Sigmoid colon (tissue), 7 donors: ENCODE measurements at regions of chr2 and their contacts with region 1.

Region 1: GRCh38 chr2:63841254-63842022 is at the start of gene UGP2:
- DNase-seq: peak; percentile 96
- H3K4me3 ChIP-seq: peak within 1 kb of the TSS; percentile 81 to 97 (median 95)
- H3K27ac ChIP-seq: peak within 1 kb of the TSS; percentile 93 to 100 (median 98)
- H3K4me1 ChIP-seq: peaks cover 0 to 55% (median 21%) of the 10 kb centered on the region in 4 donors
- H3K27me3 ChIP-seq: no peaks in the 10 kb centered on the region
- CTCF ChIP-seq: no peak
- EP300 ChIP-seq: no peak
- POLR2A ChIP-seq: peak; percentile 56 to 67
- total RNA-seq, gene UGP2: 132 to 196 (median 149) TPM

Region 2: DNA sequence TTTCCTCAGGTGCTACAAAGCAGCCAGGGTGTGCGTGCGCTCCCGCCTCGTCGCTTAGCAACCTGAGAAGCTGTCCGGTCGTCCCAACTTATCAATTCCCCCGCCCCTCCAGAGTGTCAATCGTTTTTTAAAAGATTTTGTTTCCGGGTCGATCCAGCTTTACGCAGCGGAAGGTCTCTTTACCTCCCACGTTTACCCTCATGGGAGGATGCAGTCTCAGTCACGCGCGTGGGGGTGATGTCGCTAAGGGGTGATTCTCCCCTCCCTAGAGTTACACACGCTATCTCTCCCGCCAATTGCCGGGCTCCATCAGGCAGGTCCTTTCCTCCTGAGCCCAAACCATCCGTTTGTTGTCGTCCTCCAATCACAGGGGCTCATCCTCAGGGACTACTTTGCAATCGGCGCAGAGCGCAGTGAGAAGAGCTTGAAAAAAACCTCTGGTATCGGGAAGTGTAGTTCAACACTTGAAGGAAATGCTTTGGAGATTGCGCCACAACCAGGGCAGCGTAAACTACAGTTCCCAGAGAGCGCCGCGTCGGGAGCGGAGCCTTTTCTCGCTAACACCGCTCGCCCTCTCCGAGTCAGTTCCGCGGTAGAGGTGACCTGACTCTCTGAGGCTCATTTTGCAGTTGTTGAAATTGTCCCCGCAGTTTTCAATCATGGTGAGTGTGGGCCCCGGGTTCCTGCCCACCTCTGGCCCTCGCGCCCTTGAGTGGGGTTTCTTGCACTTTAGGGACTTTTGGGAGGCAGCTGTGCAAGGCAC is 252.9 kb before region 1 on chr2 and contains the starts of genes MDH1 and WDPCP:
- intact Hi-C with region 1: loop called (anchors 5 kb)
- DNase-seq: peak; percentile 97
- H3K4me3 ChIP-seq: peak within 1 kb of the TSS; percentile 82 to 84 (median 83)
- H3K27ac ChIP-seq: peak within 1 kb of the TSS; percentile 84 to 92 (median 90)
- H3K4me1 ChIP-seq: peaks cover 0 to 45% (median 41%) of the 10 kb centered on the region in 4 donors
- H3K27me3 ChIP-seq: no peaks in the 10 kb centered on the region
- CTCF ChIP-seq: no peak
- EP300 ChIP-seq: no peak
- POLR2A ChIP-seq: peak; percentile 90 to 94
- total RNA-seq, gene MDH1: 198 to 224 (median 214) TPM
- total RNA-seq, gene WDPCP: 14.0 to 35.5 (median 19.9) TPM

Region 3: GRCh38 chr2:63698825-63699548 is 142.5 kb before region 1 on chr2:
- intact Hi-C with region 1: loop called (anchors 5 kb)
- DNase-seq: peak; percentile 84
- H3K4me3 ChIP-seq: no peak overlapping the region
- H3K27ac ChIP-seq: peak overlapping the region in 2 of 4 donors; percentile 26 to 58
- H3K4me1 ChIP-seq: peaks cover 0 to 5% (median 0%) of the 10 kb centered on the region in 4 donors
- H3K27me3 ChIP-seq: no peaks in the 10 kb centered on the region
- CTCF ChIP-seq: peak in 3 of 4 experiments; percentile 7 to 41 (median 32)
- EP300 ChIP-seq: no peak
- POLR2A ChIP-seq: no peak

Region 4: GRCh38 chr2:63888490-63889402 is 47.3 kb after region 1 on chr2:
- intact Hi-C with region 1: loop called (anchors 5 kb)
- DNase-seq: no peak
- H3K4me3 ChIP-seq: no peak overlapping the region
- H3K27ac ChIP-seq: no peak overlapping the region
- H3K4me1 ChIP-seq: peaks cover 0 to 22% (median 3%) of the 10 kb centered on the region in 4 donors
- H3K27me3 ChIP-seq: no peaks in the 10 kb centered on the region
- CTCF ChIP-seq: peak; percentile 37 to 62 (median 56)
- EP300 ChIP-seq: no peak
- POLR2A ChIP-seq: no peak

Region 5: DNA sequence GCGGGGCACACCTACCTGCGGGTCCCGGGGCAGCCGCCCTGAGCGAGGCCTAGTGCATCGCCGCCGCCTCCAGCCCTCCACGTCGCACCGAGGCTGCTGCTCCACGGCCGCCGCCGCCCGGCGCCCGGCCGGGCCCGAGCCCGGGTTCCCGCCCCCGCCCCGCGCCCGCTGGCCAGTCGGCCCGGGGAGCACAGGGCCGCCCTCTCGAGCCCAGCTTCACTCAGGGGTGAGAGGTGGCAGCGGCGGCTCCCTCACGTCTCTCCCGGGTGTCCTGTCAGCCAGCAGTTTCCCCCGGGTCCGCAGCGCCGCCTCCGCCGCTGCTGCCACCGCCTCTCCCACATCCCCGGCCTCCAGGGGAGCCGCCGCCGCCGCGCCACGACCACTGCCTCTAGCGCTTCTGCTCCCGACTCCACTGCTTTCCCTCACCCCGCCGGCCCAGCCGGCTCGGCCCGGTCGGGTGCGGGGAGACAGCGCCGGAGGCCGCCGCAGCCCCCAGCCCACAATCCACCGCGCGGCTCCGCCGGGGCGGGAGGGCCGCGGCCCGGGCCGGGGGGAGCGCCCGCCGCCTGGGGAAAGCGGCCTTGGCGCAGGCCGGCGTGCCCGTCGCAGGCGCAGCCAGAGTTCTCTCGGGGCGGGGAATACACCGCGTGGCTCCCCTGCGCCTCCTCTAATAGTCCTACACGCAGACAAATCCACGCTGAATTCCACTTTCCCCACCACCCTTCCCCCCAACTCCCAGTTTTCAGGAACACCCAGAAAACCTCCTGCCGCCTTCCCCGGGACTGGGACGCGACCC is 177.7 kb after region 1 on chr2 and contains the start of gene VPS54:
- intact Hi-C with region 1: loop called (anchors 5 kb)
- DNase-seq: peak; percentile 82
- H3K4me3 ChIP-seq: peak within 1 kb of the TSS; percentile 75 to 97 (median 82)
- H3K27ac ChIP-seq: peak within 1 kb of the TSS; percentile 96 to 99 (median 97)
- H3K4me1 ChIP-seq: peaks cover 0 to 48% (median 39%) of the 10 kb centered on the region in 4 donors
- H3K27me3 ChIP-seq: no peaks in the 10 kb centered on the region
- CTCF ChIP-seq: peak in 1 of 4 experiments; percentile 23
- EP300 ChIP-seq: no peak
- POLR2A ChIP-seq: peak; percentile 24 to 44
- total RNA-seq, gene VPS54: 24.9 to 27.5 (median 27.2) TPM